CD8-positive, alpha-beta T cell (primary cell): ENCODE measurements at regions of chr3 and their contacts with region 1.

Region 1: DNA sequence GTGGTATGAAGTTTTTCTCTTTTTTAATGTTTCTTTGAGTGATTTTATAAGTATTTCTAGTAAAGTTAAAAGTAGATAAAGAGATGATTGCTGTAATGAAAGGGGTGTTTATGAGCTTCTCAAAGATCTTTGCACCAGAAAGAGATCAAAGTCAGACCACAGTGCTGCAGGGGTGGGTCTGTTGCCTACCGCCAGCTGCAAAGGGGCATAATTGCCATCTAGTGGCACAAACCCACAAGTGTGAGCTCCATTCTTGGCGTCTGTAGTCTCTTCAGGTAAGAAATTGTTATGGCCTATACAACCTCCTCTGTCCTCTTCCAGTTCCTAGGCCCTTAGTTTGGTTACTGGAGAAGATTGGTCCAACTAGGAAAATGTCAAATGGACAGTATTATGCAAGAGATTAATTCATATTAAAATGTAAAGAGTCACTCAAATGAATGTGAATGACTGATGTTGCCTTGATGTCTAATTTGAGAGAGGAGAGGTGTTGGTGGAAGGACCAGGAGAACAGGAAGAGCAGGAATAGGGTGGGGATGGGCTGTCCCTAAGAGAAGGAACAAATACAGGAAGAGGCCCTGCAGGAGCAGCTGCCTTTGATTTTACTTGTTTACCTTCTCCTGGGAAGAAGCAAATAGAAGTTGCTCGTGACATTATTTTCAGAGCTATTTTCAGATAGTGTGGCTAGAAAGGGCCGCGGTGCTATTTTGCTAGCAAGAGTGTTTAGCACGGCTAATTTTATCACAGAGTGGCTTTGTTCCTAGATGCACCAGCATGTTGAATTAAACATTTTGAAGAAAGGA is 53.0 kb upstream of the GSK3B start:
- DNase-seq: peak; percentile 7 to 81 (median 60)
- ATAC-seq: peak; percentile 98
- H3K4me3 ChIP-seq: no peak overlapping the region
- H3K4me3 Mint-ChIP-seq: no peak overlapping the region
- H3K27ac ChIP-seq: no peak overlapping the region
- H3K27ac Mint-ChIP-seq: peak overlapping the region; percentile 60
- H3K4me1 ChIP-seq: peaks cover 10% of the 10 kb centered on the region
- H3K4me1 Mint-ChIP-seq: peaks cover 22% of the 10 kb centered on the region
- H3K27me3 ChIP-seq: no peaks in the 10 kb centered on the region
- H3K27me3 Mint-ChIP-seq: no peaks in the 10 kb centered on the region
- CTCF ChIP-seq: peak; percentile 62

Region 2: DNA sequence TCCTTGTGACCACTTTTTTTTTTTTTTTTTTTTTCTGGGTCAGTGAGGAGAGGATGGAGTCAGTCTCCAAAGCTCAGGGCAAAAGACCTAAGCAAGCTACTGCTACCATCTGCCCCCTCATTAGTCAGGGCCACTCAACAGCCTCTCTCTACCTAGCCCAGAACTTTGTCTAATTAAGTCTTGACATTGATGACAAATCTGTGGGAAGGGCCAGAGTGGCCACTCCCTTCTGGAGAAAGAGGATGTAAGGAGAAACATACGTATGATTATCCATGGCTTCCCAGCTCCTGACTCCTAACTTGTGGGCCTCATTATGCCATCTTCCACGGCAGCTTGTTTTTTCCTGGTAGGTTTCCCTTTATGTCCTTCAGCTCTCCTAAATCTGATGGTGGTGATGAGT is 327.5 kb before region 1 on chr3:
- CTCF ChIA-PET with region 1: interaction called, 10 read pairs
- POLR2A ChIA-PET with region 1: no interaction called
- intact Hi-C with region 1: loop called (anchors 2 to 5 kb)
- DNase-seq: no peak
- ATAC-seq: no peak
- H3K4me3 ChIP-seq: no peak overlapping the region
- H3K4me3 Mint-ChIP-seq: no peak overlapping the region
- H3K27ac ChIP-seq: no peak overlapping the region
- H3K27ac Mint-ChIP-seq: no peak overlapping the region
- H3K4me1 ChIP-seq: no peaks in the 10 kb centered on the region
- H3K4me1 Mint-ChIP-seq: no peaks in the 10 kb centered on the region
- H3K27me3 ChIP-seq: no peaks in the 10 kb centered on the region
- H3K27me3 Mint-ChIP-seq: no peaks in the 10 kb centered on the region
- CTCF ChIP-seq: no peak

Region 3: GRCh38 chr3:119880966-119881365 is 266.3 kb before region 1 on chr3:
- CTCF ChIA-PET with region 1: interaction called, 10 read pairs
- POLR2A ChIA-PET with region 1: no interaction called
- intact Hi-C with region 1: no loop called
- DNase-seq: no peak
- ATAC-seq: no peak
- H3K4me3 ChIP-seq: no peak overlapping the region
- H3K4me3 Mint-ChIP-seq: no peak overlapping the region
- H3K27ac ChIP-seq: no peak overlapping the region
- H3K27ac Mint-ChIP-seq: no peak overlapping the region
- H3K4me1 ChIP-seq: no peaks in the 10 kb centered on the region
- H3K4me1 Mint-ChIP-seq: peaks cover 6% of the 10 kb centered on the region
- H3K27me3 ChIP-seq: no peaks in the 10 kb centered on the region
- H3K27me3 Mint-ChIP-seq: no peaks in the 10 kb centered on the region
- CTCF ChIP-seq: no peak

Region 4: DNA sequence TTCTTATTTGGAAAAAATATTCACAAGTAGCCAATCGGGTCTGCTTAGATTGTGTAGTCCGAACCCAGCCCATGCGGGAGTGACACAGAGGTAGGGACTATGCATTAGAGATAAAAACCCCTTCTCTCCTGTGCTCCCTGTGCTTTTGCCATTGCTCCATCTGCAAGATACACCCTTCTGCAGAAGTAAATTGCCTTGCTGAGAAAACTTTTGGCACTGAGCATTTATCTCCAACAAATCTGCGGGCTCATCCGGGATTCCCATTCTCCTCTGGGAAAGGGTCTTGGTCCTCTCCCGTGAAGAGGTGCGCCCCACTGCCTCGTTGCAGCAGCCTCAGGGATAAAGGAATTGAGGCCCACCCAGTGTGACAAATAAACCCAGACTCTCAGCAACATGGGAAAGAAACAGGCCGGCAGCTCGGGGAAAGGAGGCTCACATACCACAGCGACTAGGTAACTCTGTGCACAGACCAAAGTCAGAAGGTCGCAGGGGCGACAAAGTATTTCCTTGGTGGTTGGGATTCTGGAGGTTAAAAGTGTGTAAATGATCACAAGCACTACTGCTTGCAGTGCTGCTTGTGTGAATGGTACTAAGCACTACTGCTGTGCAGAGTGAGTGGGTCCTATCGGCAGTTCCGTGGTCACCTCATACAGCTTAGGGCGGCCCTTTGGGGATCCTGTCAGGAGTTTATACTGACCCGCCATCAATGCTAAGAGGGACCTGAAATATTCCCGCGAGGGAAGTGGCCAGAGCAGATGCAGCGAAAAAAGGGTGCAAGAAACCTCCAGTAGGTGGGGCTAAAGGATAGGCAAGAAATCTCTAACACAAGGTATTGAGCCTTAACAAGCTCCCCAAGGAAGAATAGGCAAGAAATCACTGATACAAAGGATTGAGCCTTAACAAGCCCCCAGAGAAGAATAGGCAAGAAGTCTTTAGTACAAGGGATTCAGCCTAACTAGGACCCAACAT is 107.3 kb before region 1 on chr3:
- CTCF ChIA-PET with region 1: interaction called, 3 read pairs
- POLR2A ChIA-PET with region 1: no interaction called
- intact Hi-C with region 1: loop called in 1 of 2 experiments (anchors 5 kb)
- DNase-seq: peak in 2 of 9 experiments; percentile 11 to 34
- ATAC-seq: no peak
- H3K4me3 ChIP-seq: no peak overlapping the region
- H3K4me3 Mint-ChIP-seq: no peak overlapping the region
- H3K27ac ChIP-seq: no peak overlapping the region
- H3K27ac Mint-ChIP-seq: no peak overlapping the region
- H3K4me1 ChIP-seq: peaks cover 4% of the 10 kb centered on the region
- H3K4me1 Mint-ChIP-seq: peaks cover 40% of the 10 kb centered on the region
- H3K27me3 ChIP-seq: no peaks in the 10 kb centered on the region
- H3K27me3 Mint-ChIP-seq: no peaks in the 10 kb centered on the region
- CTCF ChIP-seq: no peak